ENCODE measurements at regions of chr20 and their contacts with region 1.

Region 1: DNA sequence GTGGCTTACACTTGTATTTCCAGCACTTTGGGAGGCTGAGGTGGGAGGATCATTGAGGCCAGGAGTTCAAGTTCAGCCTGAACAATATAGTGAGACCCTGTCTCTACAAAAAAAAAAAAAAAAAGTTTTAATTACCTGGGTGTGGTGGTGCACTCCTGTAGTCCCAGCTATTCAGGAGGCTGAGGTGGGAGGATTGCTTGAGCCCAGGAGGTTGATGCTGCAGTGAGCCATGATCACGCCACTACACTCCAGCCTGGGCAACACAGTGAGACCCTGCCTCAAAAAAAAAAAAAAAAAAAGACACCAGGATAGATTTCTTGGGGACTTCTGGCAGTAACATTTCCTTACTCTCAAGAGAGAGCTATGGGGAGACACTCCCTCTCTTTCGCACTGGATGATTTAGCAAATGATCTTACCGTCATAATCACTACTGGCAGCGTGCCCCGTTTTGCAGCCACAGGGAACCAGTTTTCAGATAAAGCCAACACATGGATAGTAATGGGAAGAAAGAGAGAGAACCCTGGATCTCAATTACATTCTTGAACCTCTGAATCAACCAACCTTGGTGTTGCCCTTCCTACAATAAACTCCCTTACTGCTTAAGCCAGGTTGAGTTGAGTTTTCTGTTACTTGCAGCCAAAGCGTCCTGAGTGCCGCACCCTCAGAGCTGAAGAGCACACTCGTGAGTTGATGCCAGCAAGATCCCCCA is 18.1 kb upstream of the PTPN1 start:
- DNase-seq: peak; percentile 36 to 58
- H3K4me3 ChIP-seq: no peak overlapping the region
- H3K27ac ChIP-seq: peak overlapping the region; percentile 88
- H3K4me1 ChIP-seq: peaks cover 29% of the 10 kb centered on the region
- H3K27me3 ChIP-seq: no peaks in the 10 kb centered on the region
- CTCF ChIP-seq: no peak

Region 2: DNA sequence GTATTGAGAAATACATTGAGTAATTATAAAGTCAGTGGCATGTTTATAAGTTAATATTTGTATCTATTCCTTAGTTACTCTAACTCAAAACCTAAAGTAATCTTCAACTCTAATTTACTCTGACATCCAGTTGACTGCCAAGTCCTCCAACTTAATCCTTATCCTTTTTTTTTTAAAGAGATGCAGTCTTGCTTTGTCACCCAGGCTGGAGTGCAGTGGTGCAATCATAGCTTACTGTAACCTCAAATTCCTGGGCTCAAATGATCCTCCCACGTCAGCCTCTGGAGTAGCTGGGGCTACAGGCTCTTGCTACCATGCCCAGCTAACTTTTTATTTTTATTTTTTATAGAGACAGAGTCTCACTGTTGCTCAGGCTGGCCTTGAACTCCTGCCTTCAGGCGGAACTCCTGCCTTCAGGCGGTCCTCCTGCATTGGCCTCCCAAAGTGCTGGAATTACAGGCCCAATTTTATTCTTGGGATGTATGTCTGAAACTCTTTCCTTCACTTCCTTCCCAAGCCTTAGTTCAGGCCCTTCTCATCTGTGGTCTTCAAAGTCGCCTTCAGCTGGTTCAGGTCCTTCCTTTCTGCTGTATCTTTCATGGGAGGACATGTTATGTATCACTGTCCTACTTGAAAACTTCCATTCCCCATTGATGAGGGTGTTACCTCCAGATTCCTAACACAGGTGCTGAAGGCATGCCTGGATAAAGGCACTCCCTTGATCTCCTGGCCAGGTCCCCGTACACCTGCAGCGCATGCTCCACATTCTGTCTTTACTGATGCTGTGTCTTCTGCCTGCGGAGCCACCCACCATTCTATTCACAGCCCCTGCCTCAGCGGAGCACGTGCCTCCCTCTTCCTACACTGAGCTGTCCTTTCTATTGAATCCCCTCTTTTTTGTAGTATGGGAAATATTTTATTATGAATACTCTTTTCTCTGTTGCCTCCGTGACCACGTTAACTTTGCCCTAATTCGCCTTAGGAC is 42.8 kb after region 1 on chr20:
- CTCF ChIA-PET with region 1: no interaction called
- POLR2A ChIA-PET with region 1: interaction called, 44 read pairs
- intact Hi-C with region 1: loop called (anchors 5 kb)
- DNase-seq: peak; percentile 25 to 54
- H3K4me3 ChIP-seq: no peak overlapping the region
- H3K27ac ChIP-seq: peak overlapping the region; percentile 24
- H3K4me1 ChIP-seq: peaks cover 42% of the 10 kb centered on the region
- H3K27me3 ChIP-seq: no peaks in the 10 kb centered on the region
- CTCF ChIP-seq: no peak